Panc1 (cell line): ENCODE measurements at regions of chr3 and their contacts with region 1.

Region 1: GRCh38 chr3:156554842-156555687 is at the start of gene SSR3:
- DNase-seq: peak; percentile 93
- ATAC-seq: peak; percentile 100
- H3K4me3 ChIP-seq: peak within 1 kb of the TSS; percentile 67 to 73
- H3K27ac ChIP-seq: peak within 1 kb of the TSS; percentile 87
- H3K4me1 ChIP-seq: peaks cover 12% of the 10 kb centered on the region; the same call in 1 of the 2 replicates
- H3K27me3 ChIP-seq: no peaks in the 10 kb centered on the region
- CTCF ChIP-seq: no peak
- total RNA-seq, gene SSR3: 154 TPM

Region 2: GRCh38 chr3:156576651-156577343 is 21.7 kb after region 1 on chr3:
- CTCF ChIA-PET with region 1: no interaction called
- POLR2A ChIA-PET with region 1: no interaction called
- in situ Hi-C with region 1: no loop called
- intact Hi-C with region 1: no loop called
- DNase-seq: no peak
- ATAC-seq: no peak
- H3K4me3 ChIP-seq: no peak overlapping the region
- H3K27ac ChIP-seq: no peak overlapping the region
- H3K4me1 ChIP-seq: no peaks in the 10 kb centered on the region
- H3K27me3 ChIP-seq: peaks cover 10% of the 10 kb centered on the region; the same call in 1 of the 2 replicates
- CTCF ChIP-seq: no peak

Region 3: DNA sequence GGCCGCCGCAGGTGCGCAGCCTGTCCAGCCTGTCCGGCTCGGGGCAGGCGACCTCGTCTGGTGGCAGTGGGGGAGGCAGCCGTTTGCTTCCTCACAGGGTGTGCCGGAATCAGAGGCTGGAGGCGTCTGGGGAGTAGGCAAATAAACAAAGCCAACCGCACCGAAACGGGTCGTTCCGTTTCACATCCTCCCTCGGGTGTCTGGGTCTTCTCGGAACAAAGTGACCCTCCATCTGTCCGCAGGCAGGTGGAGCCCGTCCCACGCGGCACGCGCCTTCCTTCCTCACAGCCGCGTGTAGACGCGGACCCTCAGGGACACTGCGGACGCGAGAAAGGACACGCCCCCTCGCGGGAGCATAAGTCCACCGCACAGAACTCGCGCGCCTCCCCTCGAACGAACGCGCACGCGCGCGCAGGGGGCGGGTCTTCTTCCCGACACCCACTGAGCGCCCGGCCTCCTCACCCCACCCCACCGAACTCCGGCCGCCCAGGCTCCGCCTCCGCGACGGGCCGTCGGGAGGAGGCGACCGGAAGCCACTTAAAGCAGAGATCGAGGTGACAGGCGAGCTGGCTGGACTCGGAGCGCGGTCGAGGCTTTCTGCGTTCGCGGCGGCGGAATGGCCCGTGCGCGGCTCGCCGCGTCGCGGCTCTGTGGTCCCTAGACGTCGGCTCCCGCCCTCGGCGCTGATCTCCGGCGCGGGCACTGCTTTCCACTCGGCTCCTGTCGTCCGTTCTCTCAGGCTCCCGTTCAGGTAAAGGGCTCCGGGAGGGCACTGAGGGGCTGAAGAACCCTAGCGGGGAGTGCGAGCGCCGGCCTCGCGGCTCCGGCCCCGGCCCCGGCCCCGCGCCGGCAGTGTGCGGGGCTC is 119.2 kb after region 1 on chr3 and contains the start of gene TIPARP:
- CTCF ChIA-PET with region 1: no interaction called
- POLR2A ChIA-PET with region 1: no interaction called
- in situ Hi-C with region 1: no loop called
- intact Hi-C with region 1: loop called (anchors 5 kb)
- DNase-seq: peak; percentile 93
- ATAC-seq: peak; percentile 90
- H3K4me3 ChIP-seq: peak within 1 kb of the TSS; percentile 84 to 89
- H3K27ac ChIP-seq: peak within 1 kb of the TSS; percentile 86
- H3K4me1 ChIP-seq: peaks cover 27% of the 10 kb centered on the region
- H3K27me3 ChIP-seq: no peaks in the 10 kb centered on the region
- CTCF ChIP-seq: peak; percentile 93
- total RNA-seq, gene TIPARP: 22.1 TPM

Region 4: GRCh38 chr3:157136647-157137387 is 581.8 kb after region 1 on chr3:
- CTCF ChIA-PET with region 1: no interaction called
- POLR2A ChIA-PET with region 1: no interaction called
- in situ Hi-C with region 1: no loop called
- intact Hi-C with region 1: loop called (anchors 5 kb)
- DNase-seq: no peak
- ATAC-seq: no peak
- H3K4me3 ChIP-seq: no peak overlapping the region
- H3K27ac ChIP-seq: no peak overlapping the region; the same call in 1 of the 2 replicates
- H3K4me1 ChIP-seq: peaks cover 17% of the 10 kb centered on the region; the same call in 1 of the 2 replicates
- H3K27me3 ChIP-seq: no peaks in the 10 kb centered on the region
- CTCF ChIP-seq: no peak